BJ (cell line): ENCODE measurements at regions of chr20 and their contacts with region 1.

Region 1: DNA sequence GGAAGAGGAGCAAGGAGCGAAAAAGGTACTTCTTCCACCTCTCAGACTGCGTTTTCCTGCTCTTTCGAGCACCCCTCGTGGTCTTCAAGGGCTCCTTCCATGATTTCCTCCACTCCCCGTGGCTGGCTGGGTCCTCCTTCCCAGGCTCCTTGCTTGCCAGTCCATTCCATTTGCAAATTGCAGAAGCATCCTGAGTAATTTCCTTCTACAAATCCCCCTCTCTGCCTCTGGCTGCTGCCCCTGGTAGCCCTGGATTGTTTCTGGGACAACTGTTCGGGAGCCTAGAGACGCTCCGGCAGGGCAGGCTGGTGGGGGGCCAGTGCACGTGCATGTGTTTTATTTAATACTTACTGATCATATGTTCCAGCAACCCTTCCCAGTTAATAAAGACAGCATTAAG is 173.1 kb downstream of the ZMYND8 start:
- DNase-seq: no peak
- H3K4me3 ChIP-seq: no peak overlapping the region
- H3K27me3 ChIP-seq: no peaks in the 10 kb centered on the region; the same call in 1 of the 2 replicates
- CTCF ChIP-seq: no peak

Region 2: GRCh38 chr20:47196091-47197081 is 13.0 kb after region 1 on chr20:
- CTCF ChIA-PET with region 1: interaction called, 10 read pairs
- POLR2A ChIA-PET with region 1: no interaction called
- DNase-seq: no peak
- H3K4me3 ChIP-seq: no peak overlapping the region
- H3K27me3 ChIP-seq: no peaks in the 10 kb centered on the region
- CTCF ChIP-seq: peak; percentile 97

Region 3: GRCh38 chr20:47252879-47253307 is 69.5 kb after region 1 on chr20:
- CTCF ChIA-PET with region 1: no interaction called
- POLR2A ChIA-PET with region 1: no interaction called
- DNase-seq: no peak
- H3K4me3 ChIP-seq: no peak overlapping the region
- H3K27me3 ChIP-seq: no peaks in the 10 kb centered on the region
- CTCF ChIP-seq: no peak